GM23248 (cell line): ENCODE measurements at regions of chr11 and their contacts with region 1.

Region 1: GRCh38 chr11:72478659-72479058 is 44.3 kb upstream of the CLPB start:
- DNase-seq: peak; percentile 13
- H3K4me3 ChIP-seq: no peak overlapping the region
- H3K27ac ChIP-seq: no peak overlapping the region
- H3K4me1 ChIP-seq: no peaks in the 10 kb centered on the region
- H3K27me3 ChIP-seq: no peaks in the 10 kb centered on the region

Region 2: GRCh38 chr11:72358466-72359405 is 119.9 kb before region 1 on chr11:
- in situ Hi-C with region 1: no loop called
- DNase-seq: no peak
- H3K4me3 ChIP-seq: no peak overlapping the region
- H3K27ac ChIP-seq: no peak overlapping the region
- H3K4me1 ChIP-seq: no peaks in the 10 kb centered on the region; the same call in 1 of the 2 replicates
- H3K27me3 ChIP-seq: no peaks in the 10 kb centered on the region

Region 3: DNA sequence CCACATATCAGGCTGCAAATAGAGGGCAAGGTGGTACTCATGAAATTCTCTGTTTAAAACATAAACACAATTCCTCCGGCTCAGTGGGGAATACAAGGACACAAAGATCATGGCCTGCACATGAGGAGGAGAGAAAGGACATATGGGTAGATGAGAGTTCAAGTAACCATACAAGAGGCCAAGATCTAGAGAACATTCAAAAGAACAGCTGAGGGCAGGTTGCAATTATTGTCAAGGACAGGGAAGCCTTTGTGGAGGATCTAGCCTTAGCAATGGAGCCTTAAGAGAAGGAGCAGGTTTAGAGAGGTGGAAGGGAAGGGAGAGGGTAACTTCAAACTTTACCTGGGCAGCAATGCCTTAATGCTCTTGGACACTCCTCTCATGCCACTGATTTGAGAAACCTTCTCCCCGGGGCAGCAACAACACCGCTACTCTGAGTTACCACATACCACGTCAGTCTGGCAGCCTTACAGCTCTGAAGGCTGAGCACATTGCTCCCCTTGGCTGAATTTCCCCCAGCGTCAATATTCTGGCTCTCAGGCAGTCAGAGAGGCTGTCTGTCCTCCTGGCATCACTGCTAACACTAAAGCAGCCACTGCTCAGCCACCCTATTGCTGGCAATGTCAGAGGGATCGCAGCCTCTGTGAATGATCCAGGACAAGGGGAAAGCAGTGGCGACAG is 99.8 kb before region 1 on chr11:
- in situ Hi-C with region 1: no loop called
- DNase-seq: peak; percentile 64
- H3K4me3 ChIP-seq: no peak overlapping the region
- H3K27ac ChIP-seq: no peak overlapping the region
- H3K4me1 ChIP-seq: no peaks in the 10 kb centered on the region
- H3K27me3 ChIP-seq: no peaks in the 10 kb centered on the region

Region 4: DNA sequence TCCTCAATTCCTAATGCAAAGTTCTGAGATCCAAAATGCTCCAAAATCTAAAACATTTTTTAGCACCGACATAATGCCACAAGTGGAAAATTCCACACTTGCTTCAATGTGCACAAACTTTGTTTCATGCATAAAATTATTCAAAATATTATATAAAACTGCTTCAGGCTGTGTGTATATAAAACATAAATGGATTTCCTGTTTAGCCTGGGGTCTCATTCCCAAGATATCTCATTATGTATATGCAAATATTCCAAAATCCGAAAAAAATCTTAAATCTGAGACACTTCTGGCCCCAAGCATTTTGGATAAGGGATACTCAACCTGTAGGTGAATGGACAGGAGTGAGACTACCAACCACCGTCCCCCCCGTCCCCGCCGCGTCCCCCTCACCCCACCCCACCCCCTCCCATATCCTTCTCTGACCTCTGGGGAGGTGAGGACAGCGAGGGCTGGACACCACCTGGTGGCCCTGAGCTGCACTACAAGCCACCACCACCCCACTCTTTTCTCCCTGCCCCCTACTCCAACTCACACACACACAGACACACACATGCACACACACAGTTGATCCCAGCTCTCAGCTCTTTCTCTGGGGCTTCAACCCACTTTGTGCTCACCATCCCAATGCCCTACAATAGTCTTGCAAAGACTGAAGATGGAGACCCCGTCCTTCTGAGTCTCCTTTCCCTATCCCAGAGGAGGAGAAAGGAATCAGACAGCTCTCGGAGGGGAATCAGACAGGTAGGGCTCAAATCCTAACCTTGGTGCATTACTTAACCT is 94.6 kb after region 1 on chr11:
- in situ Hi-C with region 1: loop called (anchors 5 kb)
- DNase-seq: peak; percentile 62
- H3K4me3 ChIP-seq: no peak overlapping the region
- H3K27ac ChIP-seq: no peak overlapping the region
- H3K4me1 ChIP-seq: peaks cover 19% of the 10 kb centered on the region
- H3K27me3 ChIP-seq: no peaks in the 10 kb centered on the region